Calu3 (cell line): ENCODE measurements at regions of chr1 and their contacts with region 1.

Region 1: GRCh38 chr1:209860293-209860881 is 32.6 kb downstream of the UTP25 start:
- DNase-seq: peak; percentile 87
- H3K4me3 Mint-ChIP-seq: no peak overlapping the region
- H3K27ac Mint-ChIP-seq: no peak overlapping the region
- H3K4me1 Mint-ChIP-seq: peaks cover 42% of the 10 kb centered on the region
- H3K27me3 Mint-ChIP-seq: no peaks in the 10 kb centered on the region
- CTCF ChIP-seq: peak; percentile 86

Region 2: DNA sequence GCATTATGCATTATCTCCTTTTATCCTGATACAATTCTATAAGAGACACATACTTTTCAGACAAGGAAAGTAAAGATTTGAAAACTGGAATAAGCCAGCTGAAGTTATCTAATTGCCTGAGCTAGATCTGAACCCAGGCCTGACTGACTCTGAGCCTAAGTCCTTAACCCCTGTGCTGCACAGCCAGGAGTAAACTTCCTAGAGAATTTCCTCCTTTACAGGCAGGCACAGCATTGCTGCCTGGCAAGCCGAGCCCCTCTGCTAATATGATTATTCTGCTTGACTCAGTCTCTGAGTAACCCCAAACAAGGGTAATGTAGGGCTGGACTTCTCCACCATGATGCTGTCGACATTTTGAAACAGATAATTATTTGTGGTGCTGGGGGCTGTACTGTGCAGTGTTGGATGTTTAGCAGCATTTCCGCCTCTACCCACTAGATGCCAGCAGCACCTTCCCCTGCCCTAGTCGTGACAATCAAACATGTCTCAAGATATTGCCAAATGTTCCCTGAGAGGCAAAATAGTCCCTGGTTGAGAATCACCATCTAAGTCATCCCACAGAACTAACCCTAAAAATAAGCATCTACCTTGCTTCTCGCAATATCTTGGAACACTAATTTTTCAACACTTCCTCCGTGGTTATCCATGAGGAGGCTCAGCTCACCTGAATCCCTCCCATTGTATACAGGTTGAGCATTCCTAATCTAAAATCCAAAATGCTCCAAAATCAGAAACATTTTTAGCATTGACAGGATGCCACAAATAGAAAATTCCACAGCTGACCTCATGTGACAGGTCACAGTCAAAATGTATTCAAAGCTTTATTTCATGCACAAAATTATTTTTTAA is 258.4 kb before region 1 on chr1:
- CTCF ChIA-PET with region 1: no interaction called
- intact Hi-C with region 1: no loop called
- DNase-seq: peak; percentile 61
- H3K4me3 Mint-ChIP-seq: no peak overlapping the region
- H3K27ac Mint-ChIP-seq: no peak overlapping the region
- H3K4me1 Mint-ChIP-seq: no peaks in the 10 kb centered on the region
- H3K27me3 Mint-ChIP-seq: peaks cover 40% of the 10 kb centered on the region
- CTCF ChIP-seq: peak; percentile 85

Region 3: GRCh38 chr1:209816923-209817322 is 43.5 kb before region 1 on chr1:
- CTCF ChIA-PET with region 1: no interaction called
- intact Hi-C with region 1: no loop called
- DNase-seq: no peak
- H3K4me3 Mint-ChIP-seq: no peak overlapping the region
- H3K27ac Mint-ChIP-seq: no peak overlapping the region
- H3K4me1 Mint-ChIP-seq: no peaks in the 10 kb centered on the region
- H3K27me3 Mint-ChIP-seq: no peaks in the 10 kb centered on the region
- CTCF ChIP-seq: no peak

Region 4: DNA sequence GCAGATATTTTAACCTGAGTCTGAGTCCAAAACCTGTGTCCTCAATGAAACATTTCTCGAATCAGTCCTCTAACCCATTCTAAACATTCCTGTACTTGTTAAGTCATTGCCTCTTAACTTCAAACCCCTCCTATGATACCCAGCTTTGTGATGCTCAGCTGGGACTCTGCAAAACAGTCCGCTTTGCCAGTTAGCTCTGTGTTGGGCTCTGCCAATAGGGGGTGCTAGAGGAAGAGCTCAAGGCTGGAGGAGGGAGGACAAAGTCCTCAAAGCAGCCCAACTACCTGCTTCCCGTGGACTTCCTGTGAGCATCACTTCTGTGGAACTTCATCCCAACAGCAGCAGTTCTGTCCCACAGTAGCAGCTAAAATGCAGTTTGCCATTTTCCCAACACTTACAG is 39.6 kb after region 1 on chr1:
- CTCF ChIA-PET with region 1: interaction called, 3 read pairs
- intact Hi-C with region 1: loop called (anchors 5 kb)
- DNase-seq: peak; percentile 42
- H3K4me3 Mint-ChIP-seq: no peak overlapping the region
- H3K27ac Mint-ChIP-seq: no peak overlapping the region
- H3K4me1 Mint-ChIP-seq: peaks cover 36% of the 10 kb centered on the region
- H3K27me3 Mint-ChIP-seq: no peaks in the 10 kb centered on the region
- CTCF ChIP-seq: peak; percentile 39

Region 5: DNA sequence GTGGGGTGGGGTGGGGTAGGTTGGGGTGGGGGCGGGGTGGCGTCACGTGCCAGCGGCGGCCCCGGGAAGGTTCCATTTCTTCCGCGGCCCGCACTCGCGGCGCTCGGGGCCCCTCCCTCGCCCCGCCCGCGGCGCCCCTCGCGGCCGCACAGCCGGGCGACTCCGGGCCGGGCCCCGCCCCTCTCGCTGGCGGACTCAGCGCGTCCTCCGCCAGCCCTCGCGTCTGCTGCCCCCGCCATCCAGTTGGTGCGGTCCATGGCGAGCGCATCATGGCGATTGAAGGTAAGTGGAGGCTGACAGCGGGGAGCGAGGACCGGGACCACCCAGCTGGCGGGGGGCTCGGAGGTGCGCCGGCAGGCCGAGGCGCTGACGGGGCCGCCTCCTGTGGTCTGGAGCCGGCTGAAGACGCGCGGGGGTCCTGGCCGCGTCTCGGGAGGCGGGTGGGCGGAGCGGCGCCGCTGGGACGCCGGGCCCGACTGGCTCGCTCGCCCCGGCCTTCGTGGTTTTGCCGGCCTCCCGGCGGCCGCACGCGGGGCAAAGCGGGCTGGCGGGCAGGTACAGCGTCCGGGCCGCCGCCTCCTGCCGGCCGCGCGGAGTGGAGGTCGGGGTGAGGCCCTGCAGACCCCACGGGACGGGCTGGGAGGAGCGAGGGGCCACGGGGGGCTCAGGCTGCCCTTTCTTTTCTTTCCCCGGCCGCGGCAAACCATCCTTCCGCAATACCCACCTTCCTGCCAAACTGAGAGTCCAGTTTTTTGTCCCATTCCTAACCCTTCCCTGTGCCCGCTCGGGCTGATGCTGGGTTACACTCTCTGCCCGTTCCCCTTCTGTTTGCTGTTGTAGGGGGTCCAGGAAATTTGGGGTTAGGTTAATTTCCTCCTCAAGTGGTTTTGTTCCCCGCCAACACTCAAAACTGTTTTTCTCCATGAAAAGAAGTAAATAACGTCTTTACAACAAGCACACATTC is 77.9 kb after region 1 on chr1 and contains the start of gene SYT14:
- CTCF ChIA-PET with region 1: no interaction called
- intact Hi-C with region 1: loop called (anchors 5 kb)
- DNase-seq: peak; percentile 29
- H3K4me3 Mint-ChIP-seq: peak within 1 kb of the TSS; percentile 68
- H3K27ac Mint-ChIP-seq: peak within 1 kb of the TSS; percentile 60
- H3K4me1 Mint-ChIP-seq: peaks cover 8% of the 10 kb centered on the region
- H3K27me3 Mint-ChIP-seq: no peaks in the 10 kb centered on the region
- CTCF ChIP-seq: no peak
- total RNA-seq, gene SYT14: 1.7 and 2.1 TPM in 2 replicates

Region 6: DNA sequence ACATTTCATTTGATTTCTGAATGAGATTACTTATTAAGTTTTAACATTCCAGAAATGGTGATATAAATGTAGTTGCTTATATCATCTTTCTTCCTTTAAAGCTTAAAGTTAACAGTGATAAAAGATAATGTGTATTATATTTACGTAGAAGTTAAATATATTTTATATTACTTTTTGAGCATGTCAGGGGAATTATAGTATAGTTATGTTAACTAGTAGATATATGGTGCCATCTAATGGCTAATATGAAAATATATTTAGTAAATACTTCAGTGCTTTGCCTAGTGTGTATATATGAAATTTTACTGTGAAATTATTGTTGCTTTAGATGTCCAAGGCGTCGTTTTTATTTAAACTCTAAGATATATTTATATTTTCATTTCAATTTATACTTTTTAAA is 129.1 kb after region 1 on chr1:
- CTCF ChIA-PET with region 1: interaction called, 12 read pairs
- intact Hi-C with region 1: loop called (anchors 1 kb)
- DNase-seq: no peak
- H3K4me3 Mint-ChIP-seq: no peak overlapping the region
- H3K27ac Mint-ChIP-seq: peak overlapping the region; percentile 90
- H3K4me1 Mint-ChIP-seq: peaks cover 18% of the 10 kb centered on the region
- H3K27me3 Mint-ChIP-seq: no peaks in the 10 kb centered on the region
- CTCF ChIP-seq: peak; percentile 46

Region 7: GRCh38 chr1:210021145-210021860 is 160.9 kb after region 1 on chr1:
- CTCF ChIA-PET with region 1: no interaction called
- intact Hi-C with region 1: no loop called
- DNase-seq: no peak
- H3K4me3 Mint-ChIP-seq: no peak overlapping the region
- H3K27ac Mint-ChIP-seq: no peak overlapping the region
- H3K4me1 Mint-ChIP-seq: no peaks in the 10 kb centered on the region
- H3K27me3 Mint-ChIP-seq: no peaks in the 10 kb centered on the region
- CTCF ChIP-seq: no peak

Region 8: DNA sequence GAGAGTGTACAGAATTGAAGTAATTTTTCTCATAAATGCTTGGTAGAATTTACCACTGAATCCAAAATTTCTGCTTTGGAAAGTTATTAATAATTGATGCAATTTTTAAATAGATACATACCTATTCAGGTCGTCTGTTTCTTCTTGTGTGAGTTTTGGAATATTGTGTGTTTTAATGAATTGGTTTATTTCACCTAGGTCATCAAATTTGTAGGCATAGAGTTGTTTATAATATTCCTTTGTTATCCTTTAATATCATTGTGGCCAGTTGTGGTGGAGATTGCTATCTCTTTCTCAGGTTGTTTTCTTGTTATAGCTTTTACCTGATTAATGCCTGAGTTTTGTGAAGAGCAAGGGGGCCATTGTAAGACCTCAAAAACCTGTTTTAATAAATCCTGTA is 171.1 kb after region 1 on chr1:
- CTCF ChIA-PET with region 1: no interaction called
- intact Hi-C with region 1: no loop called
- DNase-seq: no peak
- H3K4me3 Mint-ChIP-seq: no peak overlapping the region
- H3K27ac Mint-ChIP-seq: no peak overlapping the region
- H3K4me1 Mint-ChIP-seq: no peaks in the 10 kb centered on the region
- H3K27me3 Mint-ChIP-seq: peaks cover 14% of the 10 kb centered on the region
- CTCF ChIP-seq: no peak

Region 9: GRCh38 chr1:210123924-210124589 is 263.7 kb after region 1 on chr1:
- CTCF ChIA-PET with region 1: no interaction called
- intact Hi-C with region 1: loop called (anchors 10 kb)
- DNase-seq: no peak
- H3K4me3 Mint-ChIP-seq: no peak overlapping the region
- H3K27ac Mint-ChIP-seq: peak overlapping the region; percentile 33
- H3K4me1 Mint-ChIP-seq: peaks cover 19% of the 10 kb centered on the region
- H3K27me3 Mint-ChIP-seq: no peaks in the 10 kb centered on the region
- CTCF ChIP-seq: no peak